Posterior cingulate gyrus (tissue), 11 donors: ENCODE measurements at regions of chr18 and their contacts with region 1.

Region 1: GRCh38 chr18:57635003-57635822 is 13.6 kb upstream of the NARS1 start:
- DNase-seq: no peak

Region 2: DNA sequence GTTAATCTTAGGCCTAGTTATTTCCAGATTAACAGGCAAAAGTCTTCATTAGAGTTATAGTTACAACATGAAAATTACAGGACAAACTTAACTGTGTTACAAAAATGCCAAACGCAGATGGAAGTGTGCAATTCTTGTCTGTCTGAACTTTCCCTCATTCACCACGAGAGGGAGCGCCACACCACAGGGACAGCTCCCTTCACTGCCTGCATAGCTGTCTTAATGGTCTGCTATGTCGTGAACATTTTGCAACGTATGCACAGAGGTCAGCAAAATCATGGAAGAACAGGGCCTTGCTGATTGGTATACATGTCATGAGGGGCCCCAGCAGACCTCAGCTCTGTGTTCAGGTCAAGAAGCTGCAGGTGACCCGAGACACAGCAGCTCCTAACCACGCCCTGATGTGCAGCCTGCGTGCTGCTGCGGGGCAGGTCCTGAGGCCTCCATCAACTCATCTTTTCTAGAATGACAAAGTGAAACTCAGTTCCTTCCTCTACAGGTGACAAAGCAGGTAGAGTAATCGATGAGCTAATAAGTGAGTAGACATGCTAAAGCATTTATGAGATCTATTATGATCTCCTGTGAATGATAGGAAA is 246.7 kb after region 1 on chr18:
- intact Hi-C with region 1: loop called (anchors 5 kb)
- DNase-seq: peak; percentile 31 to 96 (median 73)

Region 3: DNA sequence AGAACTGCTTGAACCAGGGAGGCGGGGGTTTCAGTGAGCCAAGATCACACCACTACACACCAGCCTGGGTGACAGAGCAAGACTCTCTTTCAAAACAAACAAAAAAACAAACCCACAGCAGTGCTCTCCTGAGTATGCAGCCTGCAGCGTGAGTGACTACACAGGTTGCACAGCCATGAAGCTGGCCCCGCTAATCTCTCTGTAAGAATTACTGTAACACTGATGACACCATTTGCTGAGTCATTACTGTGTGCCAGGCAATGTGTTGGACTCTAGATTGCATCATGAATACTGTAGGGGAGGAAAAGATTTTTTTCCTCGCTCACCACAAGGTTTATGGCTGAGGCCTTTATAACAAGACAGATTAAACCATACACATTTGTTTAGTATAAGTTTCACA is 286.5 kb after region 1 on chr18:
- intact Hi-C with region 1: no loop called
- DNase-seq: no peak